ENCODE measurements at regions of chr10 and their contacts with region 1.

Region 1: DNA sequence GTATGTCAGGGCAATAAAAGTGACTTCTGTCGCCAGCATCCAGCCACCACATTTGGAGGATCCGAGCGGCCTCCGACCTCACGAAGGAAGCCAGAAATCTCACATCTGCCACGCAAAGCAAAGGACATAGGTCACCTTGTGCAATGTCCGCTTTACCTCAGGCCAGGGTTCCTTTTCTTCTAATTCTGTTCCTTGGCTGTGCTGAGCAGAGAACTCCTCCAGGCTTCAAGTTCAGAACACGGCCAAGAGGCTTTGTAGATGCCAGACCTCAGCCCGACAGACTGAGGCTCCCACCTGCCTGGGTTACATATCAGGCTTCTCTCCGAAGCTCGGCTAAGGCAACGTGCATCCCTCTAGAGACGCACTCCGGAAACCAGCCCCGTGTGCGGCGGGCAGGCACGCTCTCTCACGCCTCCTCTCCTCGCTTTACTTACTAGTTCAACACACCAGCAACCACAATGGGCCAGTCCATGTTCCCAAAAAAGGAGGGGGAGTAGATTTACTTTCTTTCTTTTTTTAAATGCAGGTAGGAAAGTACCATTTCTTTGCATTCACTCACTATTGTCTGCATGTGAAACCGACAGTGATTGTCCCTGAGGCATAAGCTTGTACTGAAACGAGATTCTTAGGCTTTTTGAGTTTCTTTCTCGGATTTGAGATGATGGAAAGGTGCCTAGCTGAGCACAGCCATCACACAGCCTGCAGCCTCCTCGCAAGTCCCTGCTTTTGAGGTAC is 122.4 kb upstream of the AFAP1L2 start:
- DNase-seq: peak; percentile 85
- H3K4me3 ChIP-seq: peak overlapping the region; percentile 26 to 34
- H3K27ac ChIP-seq: peak overlapping the region; percentile 52 to 74
- H3K4me1 ChIP-seq: no peaks in the 10 kb centered on the region
- H3K27me3 ChIP-seq: no peaks in the 10 kb centered on the region
- CTCF ChIP-seq: no peak
- POLR2A ChIP-seq: peak; percentile 86

Region 2: DNA sequence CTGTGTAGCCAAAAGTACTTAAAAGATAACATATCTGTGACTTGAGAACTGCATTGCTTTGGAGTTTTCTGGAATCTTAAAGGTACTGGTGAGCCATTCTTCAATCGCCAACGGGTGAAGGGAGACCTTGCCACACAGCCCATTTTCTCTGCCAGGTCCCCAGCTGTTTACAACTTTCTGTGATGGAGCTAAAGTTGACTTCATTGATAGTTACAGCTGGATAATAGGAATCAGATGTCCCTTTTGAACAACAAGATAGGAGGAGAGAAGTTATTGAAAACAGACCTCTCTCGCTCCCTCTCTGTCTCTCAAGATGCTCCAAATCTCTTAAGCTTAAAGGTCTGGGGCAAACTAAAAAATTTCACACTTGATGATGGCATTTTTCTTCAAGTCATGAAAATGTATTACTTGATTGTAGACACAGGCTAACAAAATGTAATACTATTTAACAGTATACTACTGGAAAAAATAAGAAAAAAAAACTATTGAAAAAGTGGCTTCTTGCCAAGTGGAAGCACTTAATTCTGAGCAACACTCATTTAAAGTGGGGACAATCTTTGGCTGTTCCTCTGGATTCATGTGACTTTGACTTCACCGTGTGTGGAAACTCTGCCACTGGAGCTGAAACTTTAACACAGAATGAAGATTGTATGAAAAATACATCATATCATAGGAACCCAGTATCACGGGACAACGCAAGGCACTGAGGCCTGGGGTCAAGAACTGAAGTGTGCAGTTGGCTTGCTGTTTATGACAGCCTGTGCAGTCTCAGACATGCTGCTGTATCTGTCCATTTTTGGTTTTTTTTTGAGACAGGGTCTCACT is 44.0 kb before region 1 on chr10:
- intact Hi-C with region 1: loop called (anchors 5 kb)
- DNase-seq: no peak
- H3K4me3 ChIP-seq: no peak overlapping the region
- H3K27ac ChIP-seq: no peak overlapping the region
- H3K4me1 ChIP-seq: no peaks in the 10 kb centered on the region
- H3K27me3 ChIP-seq: no peaks in the 10 kb centered on the region
- CTCF ChIP-seq: no peak
- POLR2A ChIP-seq: no peak

Region 3: DNA sequence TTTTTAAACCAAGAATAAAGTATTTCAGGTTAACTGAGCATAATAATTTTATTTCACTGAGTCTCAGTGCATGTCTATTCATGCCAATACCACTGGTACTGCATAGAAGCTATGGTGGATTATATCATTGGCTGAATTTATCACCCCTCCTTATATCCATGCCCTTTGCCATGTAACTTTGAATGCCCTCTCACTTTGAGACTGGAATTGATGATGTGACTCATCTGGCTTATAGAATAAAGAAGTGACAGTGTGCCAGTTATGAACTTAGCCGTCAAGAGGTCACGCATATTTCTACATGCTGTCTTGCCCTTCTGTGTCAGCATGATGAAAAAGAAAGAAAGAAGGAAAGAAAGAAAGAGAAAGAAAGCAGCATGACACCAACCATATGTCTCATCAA is 152.1 kb after region 1 on chr10:
- intact Hi-C with region 1: no loop called
- DNase-seq: no peak
- H3K4me3 ChIP-seq: no peak overlapping the region
- H3K27ac ChIP-seq: no peak overlapping the region
- H3K4me1 ChIP-seq: no peaks in the 10 kb centered on the region
- H3K27me3 ChIP-seq: no peaks in the 10 kb centered on the region
- CTCF ChIP-seq: no peak
- POLR2A ChIP-seq: no peak

Region 4: DNA sequence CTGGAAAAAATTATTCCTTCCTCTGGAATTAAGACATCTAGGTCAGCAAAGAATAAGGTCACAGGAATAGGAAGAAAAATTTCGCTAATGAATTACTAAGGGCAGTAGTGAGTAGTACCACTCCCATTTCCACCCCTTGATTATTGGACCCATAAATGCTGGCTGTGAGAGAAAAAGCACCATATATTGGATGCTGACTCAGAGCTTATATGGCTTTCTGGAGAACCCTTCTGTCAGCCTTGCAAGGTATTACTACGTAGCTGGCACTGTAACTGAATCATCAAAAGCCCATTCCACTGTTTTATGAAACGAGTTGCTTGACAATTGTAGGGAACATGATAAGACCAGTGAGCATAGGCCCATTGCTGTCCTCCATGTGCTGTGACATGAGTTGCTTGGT is 745.8 kb after region 1 on chr10:
- intact Hi-C with region 1: no loop called
- DNase-seq: no peak
- H3K4me3 ChIP-seq: no peak overlapping the region
- H3K27ac ChIP-seq: no peak overlapping the region
- H3K4me1 ChIP-seq: no peaks in the 10 kb centered on the region
- H3K27me3 ChIP-seq: no peaks in the 10 kb centered on the region
- CTCF ChIP-seq: no peak
- POLR2A ChIP-seq: no peak